Activated B cell treated with CpG ODN at 0.5 μM for 24 hours (primary cell): ENCODE measurements at regions of chr1 and their contacts with region 1.

Region 1: GRCh38 chr1:160124705-160125478 is 9.3 kb downstream of the ATP1A2 start:
- DNase-seq: no peak
- ATAC-seq: no peak
- H3K4me3 Mint-ChIP-seq: no peak overlapping the region
- H3K27ac Mint-ChIP-seq: no peak overlapping the region
- H3K4me1 Mint-ChIP-seq: no peaks in the 10 kb centered on the region
- H3K27me3 Mint-ChIP-seq: peaks cover 5% of the 10 kb centered on the region
- CTCF ChIP-seq: no peak

Region 2: DNA sequence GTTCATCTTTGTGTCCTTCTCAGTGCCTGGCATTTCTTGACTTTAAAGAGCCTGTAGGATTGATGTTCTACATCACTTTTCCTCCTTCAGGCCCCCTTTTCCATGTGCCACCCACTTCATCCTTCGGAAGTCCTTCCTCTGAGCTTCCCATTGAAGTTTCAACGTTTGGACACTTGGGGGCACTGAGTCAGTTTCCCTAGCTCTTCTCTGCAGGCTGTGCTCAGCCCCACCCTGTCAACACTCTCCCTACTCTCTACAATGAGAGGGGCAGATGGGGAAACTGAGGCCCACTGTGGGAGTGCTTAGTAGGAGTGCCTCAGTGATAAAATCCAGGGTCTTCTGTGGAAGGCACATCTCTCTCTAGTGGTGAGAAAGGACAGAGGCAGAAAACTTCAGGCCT is 66.8 kb before region 1 on chr1:
- CTCF ChIA-PET with region 1: no interaction called
- POLR2A ChIA-PET with region 1: no interaction called
- intact Hi-C with region 1: no loop called
- DNase-seq: no peak
- ATAC-seq: no peak
- H3K4me3 Mint-ChIP-seq: no peak overlapping the region
- H3K27ac Mint-ChIP-seq: no peak overlapping the region
- H3K4me1 Mint-ChIP-seq: no peaks in the 10 kb centered on the region
- H3K27me3 Mint-ChIP-seq: peaks cover 51% of the 10 kb centered on the region
- CTCF ChIP-seq: no peak

Region 3: DNA sequence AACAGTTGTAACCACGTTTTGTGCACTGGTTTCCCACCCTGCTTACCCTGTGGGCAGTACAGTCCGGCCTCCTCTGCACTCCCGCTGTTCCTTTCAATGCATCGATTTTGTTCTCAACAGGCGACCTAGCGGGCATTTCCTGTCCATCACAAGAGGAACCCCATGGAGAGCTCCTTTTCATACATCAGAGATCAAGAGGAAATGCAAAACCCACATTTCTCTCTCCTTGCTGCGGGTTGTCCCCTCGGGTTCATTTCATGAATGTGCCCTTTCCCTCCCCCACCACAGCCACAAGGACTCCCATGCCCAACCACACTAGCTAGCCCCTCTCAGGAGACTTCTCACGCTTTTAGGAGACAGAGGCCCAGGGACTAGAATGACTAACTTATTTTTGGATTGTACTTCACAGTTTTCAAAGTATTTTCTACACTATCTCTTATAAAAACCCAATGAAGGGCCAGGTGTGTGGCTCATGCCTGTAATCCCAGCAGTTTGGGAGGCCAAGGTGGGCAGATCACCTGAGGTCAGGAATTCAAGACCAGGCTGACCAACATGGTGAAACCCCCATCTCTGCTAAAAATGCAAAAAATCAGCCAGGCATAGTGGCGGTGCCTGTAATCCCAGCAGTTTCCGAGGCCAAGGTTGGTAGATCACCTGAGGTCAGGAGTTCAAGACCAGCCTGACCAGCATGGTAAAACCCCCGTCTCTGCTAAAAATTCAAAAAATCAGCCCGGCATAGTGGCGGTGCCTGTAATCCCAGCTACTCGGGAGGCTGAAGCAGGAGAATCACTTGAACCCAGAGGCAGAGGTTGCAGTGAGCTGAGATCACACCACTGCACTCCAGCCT is 44.9 kb after region 1 on chr1:
- CTCF ChIA-PET with region 1: no interaction called
- POLR2A ChIA-PET with region 1: no interaction called
- intact Hi-C with region 1: loop called (anchors 5 kb)
- DNase-seq: no peak
- ATAC-seq: peak; percentile 61
- H3K4me3 Mint-ChIP-seq: peak overlapping the region; percentile 48
- H3K27ac Mint-ChIP-seq: peak overlapping the region; percentile 47
- H3K4me1 Mint-ChIP-seq: peaks cover 13% of the 10 kb centered on the region
- H3K27me3 Mint-ChIP-seq: peaks cover 4% of the 10 kb centered on the region
- CTCF ChIP-seq: no peak

Region 4: DNA sequence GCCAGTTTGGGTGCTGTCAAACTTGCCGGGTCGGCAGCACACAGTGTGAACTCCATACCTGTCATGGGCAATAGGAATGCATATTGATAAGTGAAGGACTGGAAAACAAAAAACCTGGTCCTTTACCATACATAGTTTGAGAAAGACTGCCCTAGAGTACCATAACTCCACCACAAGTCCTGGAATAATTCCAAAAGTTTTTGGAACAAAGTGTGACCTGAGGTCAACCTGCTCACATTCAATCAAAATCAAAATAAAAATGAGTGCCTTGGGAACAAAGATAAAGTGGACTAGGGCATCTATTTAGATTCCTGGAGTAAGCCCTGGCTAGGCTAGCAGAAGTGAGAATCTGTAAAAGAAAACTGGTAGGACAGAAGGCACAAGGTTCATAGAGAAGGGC is 152.4 kb after region 1 on chr1:
- CTCF ChIA-PET with region 1: no interaction called
- POLR2A ChIA-PET with region 1: no interaction called
- intact Hi-C with region 1: no loop called
- DNase-seq: no peak
- ATAC-seq: no peak
- H3K4me3 Mint-ChIP-seq: no peak overlapping the region
- H3K27ac Mint-ChIP-seq: no peak overlapping the region
- H3K4me1 Mint-ChIP-seq: peaks cover 4% of the 10 kb centered on the region
- H3K27me3 Mint-ChIP-seq: no peaks in the 10 kb centered on the region
- CTCF ChIP-seq: no peak